ENCODE measurements at regions of chr11 and their contacts with region 1.

Region 1: DNA sequence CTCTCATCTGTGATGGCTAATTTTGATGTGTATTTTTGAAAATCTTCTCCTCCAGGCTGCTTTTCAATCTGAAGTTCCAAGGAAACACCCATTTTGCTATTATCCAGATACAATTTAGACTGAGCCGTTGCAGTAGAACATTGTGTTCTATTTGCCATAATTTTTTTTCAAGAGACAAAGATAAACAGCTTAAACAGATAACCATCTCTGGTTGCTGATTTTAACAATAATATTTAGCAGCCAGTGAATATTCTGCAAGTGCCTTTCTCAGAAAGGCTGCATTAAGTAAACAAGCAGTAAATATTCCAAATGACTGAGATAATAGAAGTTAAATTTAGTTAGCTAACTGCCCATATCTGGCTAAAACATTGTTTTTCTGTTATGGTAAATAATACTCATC is 206.8 kb downstream of the SBF2 start:
- DNase-seq: no peak
- ATAC-seq: no peak
- H3K4me3 Mint-ChIP-seq: no peak overlapping the region
- H3K27ac Mint-ChIP-seq: no peak overlapping the region
- H3K4me1 Mint-ChIP-seq: peaks cover 22% of the 10 kb centered on the region
- H3K27me3 Mint-ChIP-seq: no peaks in the 10 kb centered on the region
- CTCF ChIP-seq: no peak

Region 2: GRCh38 chr11:10076458-10077141 is 10.6 kb before region 1 on chr11:
- CTCF ChIA-PET with region 1: interaction called, 12 read pairs
- POLR2A ChIA-PET with region 1: no interaction called
- DNase-seq: peak; percentile 77
- ATAC-seq: peak; percentile 95
- H3K4me3 Mint-ChIP-seq: no peak overlapping the region
- H3K27ac Mint-ChIP-seq: peak overlapping the region; percentile 27; the same call in 1 of the 2 replicates
- H3K4me1 Mint-ChIP-seq: peaks cover 11% of the 10 kb centered on the region
- H3K27me3 Mint-ChIP-seq: no peaks in the 10 kb centered on the region
- CTCF ChIP-seq: peak; percentile 89

Region 3: DNA sequence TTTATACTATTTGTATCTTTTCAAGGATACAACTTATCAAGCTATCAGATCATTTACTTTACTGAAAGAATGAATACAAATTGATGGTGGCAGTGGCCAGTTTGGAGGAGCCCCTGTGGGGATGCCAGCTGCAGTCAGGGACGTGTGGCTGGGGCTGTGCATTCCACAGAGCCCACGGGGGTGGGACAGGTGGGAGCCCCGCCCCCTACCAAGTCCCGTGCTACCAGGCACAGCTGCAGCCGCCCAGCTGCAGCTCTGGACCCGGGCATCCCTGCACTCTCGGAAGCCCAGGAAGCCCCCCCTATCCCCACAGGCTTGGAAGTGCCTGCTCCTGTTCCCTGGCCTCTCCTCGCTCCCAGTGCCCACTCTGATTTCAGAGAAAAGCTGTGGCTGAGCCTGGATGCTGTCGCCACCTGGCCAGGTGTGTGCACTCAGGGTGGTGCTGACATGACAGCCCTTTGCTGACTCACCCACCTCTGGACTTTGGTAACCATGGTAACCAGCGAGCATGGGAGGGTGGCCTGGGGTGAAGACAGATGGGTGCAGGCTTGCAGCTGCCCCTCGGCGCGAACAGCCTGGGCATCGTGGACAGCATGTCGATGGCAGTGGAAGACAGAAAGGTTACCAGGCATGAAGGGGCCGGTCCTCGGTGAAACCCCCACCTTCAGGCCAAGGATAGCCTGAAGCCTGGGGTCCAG is 68.8 kb after region 1 on chr11:
- CTCF ChIA-PET with region 1: no interaction called
- POLR2A ChIA-PET with region 1: no interaction called
- DNase-seq: peak; percentile 32
- ATAC-seq: peak; percentile 69
- H3K4me3 Mint-ChIP-seq: no peak overlapping the region
- H3K27ac Mint-ChIP-seq: no peak overlapping the region
- H3K4me1 Mint-ChIP-seq: peaks cover 6% of the 10 kb centered on the region
- H3K27me3 Mint-ChIP-seq: no peaks in the 10 kb centered on the region
- CTCF ChIP-seq: no peak